Activated naive CD4-positive, alpha-beta T cell treated with anti-CD3 and anti-CD28 coated beads for 36 hours (primary cell): ENCODE measurements at regions of chr2 and their contacts with region 1.

Region 1: DNA sequence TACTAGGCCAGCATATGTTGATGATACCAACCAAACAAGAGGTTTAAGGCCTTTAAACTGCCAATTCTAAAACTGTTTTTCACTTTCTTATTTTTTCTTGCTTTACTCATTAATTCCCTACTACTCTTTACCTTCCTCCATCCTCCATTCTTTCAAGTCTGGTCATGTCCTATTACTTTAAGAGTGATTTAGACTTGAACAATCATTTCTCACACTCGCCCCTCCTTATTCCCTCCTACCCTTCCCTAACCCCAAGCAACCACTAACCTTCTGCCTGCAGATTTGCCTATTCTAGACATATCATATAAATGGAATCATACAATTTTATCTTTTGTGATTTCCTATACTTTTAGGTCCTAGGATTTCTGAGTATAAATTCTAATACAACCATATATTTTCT is 127.7 kb downstream of the USP34 start:
- DNase-seq: no peak
- H3K4me3 Mint-ChIP-seq: no peak overlapping the region
- H3K27ac Mint-ChIP-seq: peak overlapping the region; percentile 32
- H3K4me1 Mint-ChIP-seq: peaks cover 16% of the 10 kb centered on the region
- H3K27me3 Mint-ChIP-seq: no peaks in the 10 kb centered on the region

Region 2: GRCh38 chr2:61288070-61288841 is 54.9 kb before region 1 on chr2:
- CTCF ChIA-PET with region 1: interaction called, 11 read pairs
- intact Hi-C with region 1: no loop called
- DNase-seq: no peak
- H3K4me3 Mint-ChIP-seq: no peak overlapping the region
- H3K27ac Mint-ChIP-seq: no peak overlapping the region
- H3K4me1 Mint-ChIP-seq: peaks cover 13% of the 10 kb centered on the region
- H3K27me3 Mint-ChIP-seq: no peaks in the 10 kb centered on the region